ENCODE measurements at regions of chr7 and their contacts with region 1.

Region 1: GRCh38 chr7:93799750-93800357 is 90.7 kb downstream of the TFPI2 start:
- DNase-seq: peak; percentile 43
- H3K4me3 ChIP-seq: no peak overlapping the region
- H3K27ac ChIP-seq: no peak overlapping the region
- H3K4me1 ChIP-seq: no peaks in the 10 kb centered on the region
- H3K27me3 ChIP-seq: no peaks in the 10 kb centered on the region
- CTCF ChIP-seq: peak; percentile 32 to 45
- POLR2A ChIP-seq: no peak

Region 2: GRCh38 chr7:93307131-93307660 is 492.7 kb before region 1 on chr7:
- CTCF ChIA-PET with region 1: no interaction called
- POLR2A ChIA-PET with region 1: no interaction called
- dilution Hi-C with region 1: no loop called
- intact Hi-C with region 1: no loop called
- DNase-seq: no peak
- H3K4me3 ChIP-seq: no peak overlapping the region
- H3K27ac ChIP-seq: no peak overlapping the region
- H3K4me1 ChIP-seq: no peaks in the 10 kb centered on the region
- H3K27me3 ChIP-seq: no peaks in the 10 kb centered on the region
- CTCF ChIP-seq: no peak
- POLR2A ChIP-seq: no peak

Region 3: GRCh38 chr7:93779115-93779514 is 20.7 kb before region 1 on chr7:
- CTCF ChIA-PET with region 1: interaction called, 18 read pairs
- POLR2A ChIA-PET with region 1: no interaction called
- dilution Hi-C with region 1: no loop called
- intact Hi-C with region 1: no loop called
- DNase-seq: no peak
- H3K4me3 ChIP-seq: no peak overlapping the region
- H3K27ac ChIP-seq: no peak overlapping the region
- H3K4me1 ChIP-seq: no peaks in the 10 kb centered on the region
- H3K27me3 ChIP-seq: peaks cover 5 to 27% of the 10 kb centered on the region in 2 experiments
- CTCF ChIP-seq: no peak
- POLR2A ChIP-seq: no peak

Region 4: DNA sequence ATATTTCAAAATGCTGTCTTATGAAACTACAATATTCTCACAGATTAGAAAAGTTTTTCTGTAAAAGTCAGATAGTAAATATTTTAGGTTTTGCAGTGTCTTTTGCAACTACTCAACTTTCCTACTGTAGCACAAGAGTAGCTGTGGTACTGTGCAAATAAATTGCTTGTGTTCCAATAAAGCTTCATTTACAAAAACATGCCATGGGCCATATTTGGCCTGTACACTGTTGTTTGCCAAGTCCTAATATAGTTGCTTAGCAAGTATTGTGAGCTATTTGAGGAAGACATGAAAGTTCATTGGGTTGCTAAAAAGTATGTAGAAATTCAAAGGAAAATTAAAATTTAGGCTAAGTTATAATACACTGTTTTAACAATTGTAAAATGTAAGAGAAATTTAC is 10.7 kb after region 1 on chr7:
- CTCF ChIA-PET with region 1: interaction called, 11 read pairs
- POLR2A ChIA-PET with region 1: no interaction called
- dilution Hi-C with region 1: no loop called
- intact Hi-C with region 1: no loop called
- DNase-seq: no peak
- H3K4me3 ChIP-seq: no peak overlapping the region
- H3K27ac ChIP-seq: no peak overlapping the region
- H3K4me1 ChIP-seq: no peaks in the 10 kb centered on the region
- H3K27me3 ChIP-seq: peaks cover 0 to 2% of the 10 kb centered on the region in 2 experiments
- CTCF ChIP-seq: no peak
- POLR2A ChIP-seq: no peak

Region 5: DNA sequence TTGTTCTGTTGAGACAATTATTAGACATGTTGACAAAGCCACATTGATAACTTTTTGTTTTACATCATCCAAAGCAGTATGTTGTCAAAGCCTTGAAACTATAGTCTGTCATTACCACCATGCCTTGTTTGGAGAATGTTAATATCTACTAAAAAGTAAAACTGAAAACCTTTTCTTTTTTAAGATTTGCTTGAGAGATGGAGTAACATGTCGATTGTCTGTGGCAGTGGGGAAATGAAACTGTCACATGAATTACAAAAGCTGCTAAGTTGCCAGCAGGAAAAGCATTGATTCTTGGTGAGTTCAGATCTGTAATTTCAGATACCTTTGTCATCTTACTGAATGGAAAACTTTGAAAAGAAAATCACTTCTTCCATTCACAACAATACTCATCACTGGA is 21.6 kb after region 1 on chr7:
- CTCF ChIA-PET with region 1: no interaction called
- POLR2A ChIA-PET with region 1: no interaction called
- dilution Hi-C with region 1: no loop called
- intact Hi-C with region 1: no loop called
- DNase-seq: no peak
- H3K4me3 ChIP-seq: no peak overlapping the region
- H3K27ac ChIP-seq: no peak overlapping the region
- H3K4me1 ChIP-seq: no peaks in the 10 kb centered on the region
- H3K27me3 ChIP-seq: no peaks in the 10 kb centered on the region
- CTCF ChIP-seq: no peak
- POLR2A ChIP-seq: no peak

Region 6: GRCh38 chr7:94276795-94277194 is 476.9 kb after region 1 on chr7:
- CTCF ChIA-PET with region 1: interaction called, 3 read pairs
- POLR2A ChIA-PET with region 1: no interaction called
- dilution Hi-C with region 1: no loop called
- intact Hi-C with region 1: loop called (anchors 5 kb)
- DNase-seq: peak; percentile 57
- H3K4me3 ChIP-seq: no peak overlapping the region
- H3K27ac ChIP-seq: no peak overlapping the region
- H3K4me1 ChIP-seq: no peaks in the 10 kb centered on the region
- H3K27me3 ChIP-seq: no peaks in the 10 kb centered on the region
- CTCF ChIP-seq: peak; percentile 25 to 29
- POLR2A ChIP-seq: no peak